ENCODE measurements at regions of chr17 and their contacts with region 1.

Region 1: GRCh38 chr17:15999439-16000350 is at the starts of genes TTC19 and ZSWIM7:
- DNase-seq: peak; percentile 83 to 94 (median 89)
- ATAC-seq: peak; percentile 80 to 85
- H3K4me3 Mint-ChIP-seq: peak within 1 kb of the TSS; percentile 78 to 98 (median 95)
- H3K27ac Mint-ChIP-seq: peak within 1 kb of the TSS; percentile 92 to 99 (median 98)
- H3K4me1 Mint-ChIP-seq: peaks cover 24 to 47% (median 35%) of the 10 kb centered on the region in 4 donors
- H3K27me3 Mint-ChIP-seq: no peaks in the 10 kb centered on the region
- polyA plus RNA-seq, gene TTC19: 31.6 to 39.6 (median 35.1) TPM
- polyA plus RNA-seq, gene ZSWIM7: 60.9 to 87.3 (median 69.3) TPM

Region 2: DNA sequence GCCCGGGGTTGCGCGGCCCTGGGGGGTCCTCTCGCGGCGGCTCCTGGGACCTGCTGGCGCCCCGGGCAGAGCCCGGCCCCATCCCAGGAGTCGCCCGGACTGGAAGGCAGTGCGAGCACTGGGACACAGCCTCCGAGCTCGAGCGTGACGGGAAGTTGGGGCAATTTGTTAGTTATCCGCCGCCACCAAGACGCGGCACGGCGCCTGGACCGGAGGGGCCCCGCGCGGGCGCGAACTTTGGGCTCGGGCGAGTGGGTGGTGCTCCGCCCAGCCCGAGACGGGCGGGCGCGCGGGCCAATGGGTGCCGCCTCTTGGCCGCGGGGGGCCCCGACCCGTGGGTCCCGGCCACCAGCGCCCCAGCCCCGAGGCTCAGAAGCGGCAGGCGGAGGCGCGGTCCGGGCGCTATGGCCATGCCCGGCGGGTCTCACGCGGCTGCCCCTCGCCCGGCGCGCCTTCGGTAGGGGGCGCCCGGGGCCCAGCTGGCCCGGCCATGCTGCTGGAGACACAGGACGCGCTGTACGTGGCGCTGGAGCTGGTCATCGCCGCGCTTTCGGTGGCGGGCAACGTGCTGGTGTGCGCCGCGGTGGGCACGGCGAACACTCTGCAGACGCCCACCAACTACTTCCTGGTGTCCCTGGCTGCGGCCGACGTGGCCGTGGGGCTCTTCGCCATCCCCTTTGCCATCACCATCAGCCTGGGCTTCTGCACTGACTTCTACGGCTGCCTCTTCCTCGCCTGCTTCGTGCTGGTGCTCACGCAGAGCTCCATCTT is 54.8 kb before region 1 on chr17 and contains the start of gene ADORA2B:
- POLR2A ChIA-PET with region 1: interaction called, 14 read pairs
- DNase-seq: peak in 6 of 10 donors; percentile 18 to 39 (median 29)
- ATAC-seq: peak; percentile 70 to 79
- H3K4me3 Mint-ChIP-seq: peak within 1 kb of the TSS; percentile 77 to 95 (median 86)
- H3K27ac Mint-ChIP-seq: peak within 1 kb of the TSS in 2 of 10 donors; percentile 66 to 82
- H3K4me1 Mint-ChIP-seq: peaks cover 7 to 20% (median 11%) of the 10 kb centered on the region in 4 donors
- H3K27me3 Mint-ChIP-seq: peaks cover 17 to 36% (median 21%) of the 10 kb centered on the region in 5 donors
- polyA plus RNA-seq, gene ADORA2B: 0.23 to 2.2 (median 0.57) TPM

Region 3: GRCh38 chr17:15966183-15966878 is 33.4 kb before region 1 on chr17:
- POLR2A ChIA-PET with region 1: interaction called, 10 read pairs
- DNase-seq: peak in 2 of 10 donors; percentile 23 to 27
- ATAC-seq: peak; percentile 48 to 55
- H3K4me3 Mint-ChIP-seq: peak overlapping the region; percentile 58 to 92 (median 75)
- H3K27ac Mint-ChIP-seq: peak overlapping the region; percentile 80 to 98 (median 92)
- H3K4me1 Mint-ChIP-seq: peaks cover 15 to 46% (median 26%) of the 10 kb centered on the region in 4 donors
- H3K27me3 Mint-ChIP-seq: peaks cover 0 to 6% (median 0%) of the 10 kb centered on the region in 5 donors

Measured in naive thymus-derived CD8-positive, alpha-beta T cell (primary cell).